Caco-2 (cell line): ENCODE measurements at regions of chr11 and their contacts with region 1.

Region 1: DNA sequence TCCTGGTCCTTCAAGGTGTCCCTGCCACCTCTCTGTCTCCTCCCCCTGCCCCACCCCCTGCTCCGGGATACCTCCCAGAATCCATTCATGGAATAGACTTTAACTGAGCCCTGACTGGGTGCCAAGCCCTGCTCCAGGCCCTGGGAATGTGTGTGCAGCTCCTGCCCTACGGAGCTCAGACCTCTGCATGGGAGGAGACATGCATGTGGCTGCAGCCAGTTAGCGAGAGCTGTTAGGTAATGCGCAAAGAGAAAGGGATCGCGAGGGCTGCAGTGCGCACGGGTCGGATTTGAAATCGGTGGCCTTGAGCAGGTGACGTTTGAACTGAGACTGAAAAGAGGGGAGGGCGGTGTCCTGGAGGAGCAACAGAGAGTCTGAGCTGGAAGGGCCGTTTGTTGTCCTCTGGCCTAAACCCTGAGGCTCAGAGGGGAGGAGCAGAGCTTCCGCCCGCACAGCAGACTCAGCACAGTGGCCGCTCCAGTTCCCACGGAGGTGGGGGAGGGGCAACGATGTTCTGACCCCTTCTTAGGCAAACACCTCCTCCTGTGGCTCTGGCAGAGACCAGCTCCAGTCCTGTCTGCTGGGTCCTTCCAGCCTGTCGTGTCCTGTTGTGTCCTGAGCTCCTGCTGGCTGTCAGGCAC is 19.8 kb upstream of the LRRC10B start:
- DNase-seq: peak; percentile 75 to 80
- H3K4me3 ChIP-seq: no peak overlapping the region
- H3K4me3 Mint-ChIP-seq: peak overlapping the region; percentile 61
- H3K27ac Mint-ChIP-seq: peak overlapping the region; percentile 29
- H3K4me1 ChIP-seq: peaks cover 16% of the 10 kb centered on the region
- H3K4me1 Mint-ChIP-seq: peaks cover 24% of the 10 kb centered on the region
- H3K27me3 ChIP-seq: no peaks in the 10 kb centered on the region
- H3K27me3 Mint-ChIP-seq: no peaks in the 10 kb centered on the region
- CTCF ChIP-seq: no peak

Region 2: GRCh38 chr11:61347916-61348461 is 140.8 kb before region 1 on chr11:
- CTCF ChIA-PET with region 1: no interaction called
- POLR2A ChIA-PET with region 1: no interaction called
- intact Hi-C with region 1: no loop called
- DNase-seq: no peak
- H3K4me3 ChIP-seq: no peak overlapping the region
- H3K4me3 Mint-ChIP-seq: no peak overlapping the region
- H3K27ac Mint-ChIP-seq: peak overlapping the region; percentile 21
- H3K4me1 ChIP-seq: no peaks in the 10 kb centered on the region
- H3K4me1 Mint-ChIP-seq: no peaks in the 10 kb centered on the region
- H3K27me3 ChIP-seq: no peaks in the 10 kb centered on the region
- H3K27me3 Mint-ChIP-seq: no peaks in the 10 kb centered on the region
- CTCF ChIP-seq: no peak

Region 3: DNA sequence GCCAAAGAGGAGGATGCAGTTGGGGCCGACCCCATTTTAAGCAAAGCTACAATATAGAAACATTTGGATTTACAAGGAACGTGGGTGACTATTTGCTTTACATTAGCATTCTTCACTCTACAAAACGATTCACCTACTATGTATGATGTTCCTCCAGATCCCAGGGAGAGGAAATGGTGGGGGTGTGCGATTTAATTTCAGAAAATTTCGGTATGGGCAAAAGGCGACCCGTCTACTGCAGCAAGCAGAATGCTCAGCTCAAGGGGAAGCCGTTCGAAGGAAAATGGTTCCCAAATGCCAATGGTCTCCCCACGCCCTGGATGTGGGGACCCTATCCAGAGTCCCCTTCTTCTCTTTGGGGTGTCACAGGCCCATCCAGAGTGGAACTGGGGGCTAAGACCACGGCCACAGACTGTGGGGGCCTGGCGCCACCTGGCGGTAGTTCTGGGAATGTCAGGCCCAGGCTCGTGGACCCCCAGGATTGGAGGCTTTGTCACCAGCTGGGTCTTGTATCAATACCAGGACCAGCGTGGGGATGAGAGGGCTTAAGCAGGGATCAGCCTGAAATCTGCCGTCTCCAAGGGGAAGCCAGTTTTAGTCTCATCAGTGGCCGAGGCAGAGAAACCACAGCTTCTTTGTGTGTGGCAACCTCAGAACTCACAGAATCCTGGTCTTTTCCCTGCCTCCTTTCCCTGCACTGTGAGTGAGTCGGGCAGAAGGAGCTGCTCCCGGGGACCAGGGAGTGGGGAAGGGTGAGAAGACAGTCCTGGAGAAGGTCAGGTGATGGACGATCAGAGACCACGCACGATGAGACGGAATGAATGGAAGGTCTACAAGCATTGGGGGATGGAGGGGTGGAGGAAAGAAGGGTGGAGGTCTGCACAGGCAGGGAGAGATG is 28.2 kb after region 1 on chr11:
- CTCF ChIA-PET with region 1: interaction called, 13 read pairs
- POLR2A ChIA-PET with region 1: no interaction called
- intact Hi-C with region 1: no loop called
- DNase-seq: peak in 1 of 2 experiments; percentile 73
- H3K4me3 ChIP-seq: no peak overlapping the region
- H3K4me3 Mint-ChIP-seq: no peak overlapping the region
- H3K27ac Mint-ChIP-seq: no peak overlapping the region
- H3K4me1 ChIP-seq: peaks cover 23% of the 10 kb centered on the region
- H3K4me1 Mint-ChIP-seq: peaks cover 23% of the 10 kb centered on the region
- H3K27me3 ChIP-seq: no peaks in the 10 kb centered on the region
- H3K27me3 Mint-ChIP-seq: no peaks in the 10 kb centered on the region
- CTCF ChIP-seq: peak; percentile 97 to 99